ENCODE measurements at regions of chr1 and their contacts with region 1.

Region 1: DNA sequence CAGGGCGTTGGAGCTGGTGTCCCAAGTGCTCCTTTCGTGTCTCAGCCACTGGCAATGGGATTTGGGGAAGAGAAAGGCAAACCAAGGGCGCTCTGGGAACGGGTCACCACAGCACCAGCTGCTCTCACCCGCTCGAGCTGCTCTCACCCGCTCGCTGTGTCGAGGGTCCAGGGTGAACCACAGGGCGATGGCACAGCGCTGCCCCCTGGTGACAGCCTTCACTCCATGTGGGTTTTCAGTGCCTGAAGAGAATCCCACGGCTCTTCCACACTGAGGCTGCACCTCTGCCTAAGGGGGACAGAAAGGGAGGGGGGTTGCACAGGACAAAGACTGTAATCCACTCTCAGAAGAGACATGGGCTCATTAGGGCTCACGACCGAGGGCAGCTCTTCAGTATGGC is 7.1 kb upstream of the CLDN19 start:
- DNase-seq: peak; percentile 69
- CTCF ChIP-seq: peak; percentile 60

Region 2: DNA sequence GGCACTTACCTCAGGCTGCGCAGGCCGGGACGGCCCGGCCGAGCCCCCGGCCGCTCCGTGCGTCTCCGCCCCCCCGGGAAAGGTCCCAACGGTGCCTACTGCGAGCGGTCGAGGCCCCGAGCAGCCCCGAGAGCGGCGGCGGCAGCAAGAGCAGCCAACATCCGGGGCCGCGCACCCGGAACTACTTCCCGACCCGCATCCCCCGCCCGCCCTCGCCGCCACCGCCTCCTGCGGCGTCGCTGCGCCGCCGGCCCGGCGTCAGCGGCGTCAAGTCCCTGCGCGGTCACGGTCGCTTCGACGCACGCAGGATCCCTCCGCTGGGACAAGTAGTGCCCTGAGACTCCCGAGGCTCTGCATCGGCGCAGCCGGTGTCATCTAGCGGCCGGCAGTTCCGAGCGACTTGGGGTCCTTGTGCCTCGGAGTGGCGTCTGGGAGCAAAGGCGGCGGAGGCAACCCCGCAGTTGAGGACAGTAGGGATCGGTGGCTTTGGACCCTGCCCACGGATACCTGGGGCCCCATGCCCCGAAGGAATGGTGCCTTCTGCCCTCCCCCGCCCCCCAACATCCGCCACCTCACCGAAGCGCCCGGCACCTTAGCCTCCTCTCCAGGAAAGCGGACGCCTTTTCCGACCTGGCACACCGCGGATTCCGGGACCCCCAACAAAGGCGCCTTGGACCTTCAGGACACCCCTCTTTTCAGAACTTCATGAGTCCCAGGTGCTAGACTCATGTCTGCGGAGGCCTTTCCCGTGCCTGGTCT is 411.9 kb before region 1 on chr1 and contains the start of gene FOXJ3:
- in situ Hi-C with region 1: loop called (anchors 25 kb)
- DNase-seq: peak; percentile 96
- CTCF ChIP-seq: peak; percentile 7

Region 3: DNA sequence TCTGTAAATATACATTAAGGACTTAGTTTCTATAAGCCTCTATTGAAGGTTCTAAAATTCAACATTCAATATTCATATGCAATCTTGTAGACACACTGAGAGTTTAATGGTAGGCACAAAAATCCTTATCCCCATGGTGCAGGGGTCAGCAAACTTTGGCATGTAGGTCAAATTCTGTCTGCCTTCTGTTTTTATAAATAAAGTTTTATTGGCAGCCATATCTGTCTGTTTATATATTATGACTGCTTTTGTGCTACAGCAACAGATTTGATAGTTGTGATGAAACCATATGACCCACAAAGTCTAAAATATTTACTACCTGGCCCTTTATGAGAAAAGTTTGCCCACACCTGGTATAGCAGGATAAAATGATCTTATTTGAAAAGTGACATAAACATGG is 180.1 kb before region 1 on chr1:
- in situ Hi-C with region 1: no loop called
- DNase-seq: no peak
- CTCF ChIP-seq: no peak

Region 4: GRCh38 chr1:42586016-42586415 is 161.1 kb before region 1 on chr1:
- in situ Hi-C with region 1: loop called (anchors 10 kb)
- DNase-seq: no peak
- CTCF ChIP-seq: no peak

Region 5: GRCh38 chr1:42801832-42802473 is 54.8 kb after region 1 on chr1:
- in situ Hi-C with region 1: no loop called
- DNase-seq: no peak
- CTCF ChIP-seq: no peak